CD14-positive monocyte (primary cell): ENCODE measurements at regions of chr11 and their contacts with region 1.

Region 1: GRCh38 chr11:65382033-65382807 is at the start of gene SLC25A45:
- DNase-seq: peak; percentile 96 to 99 (median 98)
- H3K4me3 ChIP-seq: peak within 1 kb of the TSS; percentile 21 to 73 (median 54)
- H3K4me3 Mint-ChIP-seq: peak within 1 kb of the TSS; percentile 89 to 94
- H3K27ac ChIP-seq: peak within 1 kb of the TSS; percentile 89 to 100
- H3K27ac Mint-ChIP-seq: peak within 1 kb of the TSS; percentile 99 to 100 (median 100)
- H3K4me1 ChIP-seq: peaks cover 57 to 75% of the 10 kb centered on the region in 2 donors
- H3K4me1 Mint-ChIP-seq: peaks cover 58% of the 10 kb centered on the region
- H3K27me3 ChIP-seq: no peaks in the 10 kb centered on the region
- H3K27me3 Mint-ChIP-seq: peaks cover 0 to 2% (median 0%) of the 10 kb centered on the region in 3 donors
- CTCF ChIP-seq: peak; percentile 87
- polyA plus RNA-seq, gene SLC25A45: 3.7 to 11.3 (median 4.1) TPM

Region 2: DNA sequence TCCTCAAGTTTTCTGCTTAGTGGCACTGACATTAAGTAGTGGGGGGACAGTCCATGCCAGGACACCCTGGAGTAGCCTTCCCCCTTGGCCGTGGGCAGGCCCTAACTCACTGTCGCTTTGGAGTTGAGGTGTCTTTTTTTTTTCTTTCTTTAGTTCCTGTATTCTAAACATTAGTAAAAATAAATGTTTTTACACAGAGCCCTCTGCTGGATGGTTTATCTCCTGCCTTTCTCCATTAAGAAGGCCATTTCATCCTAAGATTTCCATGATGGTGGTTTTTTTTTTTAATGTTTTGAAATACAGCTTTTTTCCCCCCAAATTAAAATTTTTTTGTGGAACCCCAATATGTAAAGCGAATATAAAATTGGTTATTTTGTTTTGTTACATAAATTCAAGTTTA is 29.4 kb before region 1 on chr11:
- intact Hi-C with region 1: no loop called
- DNase-seq: peak in 1 of 3 donors; percentile 30
- H3K4me3 ChIP-seq: no peak overlapping the region
- H3K4me3 Mint-ChIP-seq: no peak overlapping the region
- H3K27ac ChIP-seq: peak overlapping the region in 1 of 2 donors; percentile 8
- H3K27ac Mint-ChIP-seq: peak overlapping the region in 6 of 7 donors; percentile 50 to 85 (median 78)
- H3K4me1 ChIP-seq: peaks cover 15 to 23% of the 10 kb centered on the region in 2 donors
- H3K4me1 Mint-ChIP-seq: peaks cover 20% of the 10 kb centered on the region
- H3K27me3 ChIP-seq: peaks cover 0 to 14% of the 10 kb centered on the region in 2 donors
- H3K27me3 Mint-ChIP-seq: peaks cover 6 to 18% (median 10%) of the 10 kb centered on the region in 3 donors
- CTCF ChIP-seq: peak; percentile 39

Region 3: GRCh38 chr11:65506770-65507505 is 124.7 kb after region 1 on chr11:
- intact Hi-C with region 1: loop called in 1 of 2 experiments (anchors 5 kb)
- DNase-seq: peak in 1 of 3 donors; percentile 82
- H3K4me3 ChIP-seq: peak overlapping the region; percentile 96 to 100 (median 99)
- H3K4me3 Mint-ChIP-seq: peak overlapping the region in 1 of 2 donors; percentile 96
- H3K27ac ChIP-seq: peak overlapping the region; percentile 90 to 98
- H3K27ac Mint-ChIP-seq: peak overlapping the region in 5 of 7 donors; percentile 95 to 99 (median 98)
- H3K4me1 ChIP-seq: peaks cover 56 to 58% of the 10 kb centered on the region in 2 donors
- H3K4me1 Mint-ChIP-seq: peaks cover 57% of the 10 kb centered on the region
- H3K27me3 ChIP-seq: no peaks in the 10 kb centered on the region
- H3K27me3 Mint-ChIP-seq: peaks cover 0 to 2% (median 2%) of the 10 kb centered on the region in 3 donors
- CTCF ChIP-seq: no peak